A549 (cell line): ENCODE measurements at regions of chr19 and their contacts with region 1.

Region 1: DNA sequence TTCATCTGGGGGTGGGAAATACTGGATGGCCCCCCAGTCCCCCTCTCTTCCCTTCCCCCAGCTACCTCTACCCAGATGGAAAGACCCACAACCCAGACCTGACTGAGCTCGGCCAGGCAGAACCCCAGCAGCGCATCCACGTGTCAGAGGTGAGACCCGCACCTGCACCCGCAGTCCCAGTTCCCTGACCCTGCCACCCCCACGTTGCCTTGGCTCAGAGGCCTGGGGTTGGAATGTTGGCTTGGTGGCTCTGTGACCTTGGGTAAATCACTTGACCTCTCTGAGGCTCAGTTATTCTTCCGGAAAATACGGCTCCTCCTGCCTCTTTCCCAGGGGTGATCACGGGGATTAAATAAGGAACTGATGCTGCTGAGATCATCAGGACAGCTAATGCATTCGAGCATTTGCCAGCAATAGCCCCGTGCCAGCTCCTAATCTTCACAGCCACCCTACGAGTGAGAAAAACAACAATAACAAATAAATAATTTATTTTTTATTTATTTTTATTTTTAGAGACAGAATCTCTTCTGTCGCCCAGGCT is 12.3 kb downstream of the CBLC start:
- DNase-seq: no peak
- ATAC-seq: no peak
- H3K4me3 ChIP-seq: no peak overlapping the region
- H3K27ac ChIP-seq: no peak overlapping the region
- H3K4me1 ChIP-seq: no peaks in the 10 kb centered on the region
- CTCF ChIP-seq: no peak
- EP300 ChIP-seq: no peak
- POLR2A ChIP-seq: no peak
- RAD21 ChIP-seq: no peak

Region 2: DNA sequence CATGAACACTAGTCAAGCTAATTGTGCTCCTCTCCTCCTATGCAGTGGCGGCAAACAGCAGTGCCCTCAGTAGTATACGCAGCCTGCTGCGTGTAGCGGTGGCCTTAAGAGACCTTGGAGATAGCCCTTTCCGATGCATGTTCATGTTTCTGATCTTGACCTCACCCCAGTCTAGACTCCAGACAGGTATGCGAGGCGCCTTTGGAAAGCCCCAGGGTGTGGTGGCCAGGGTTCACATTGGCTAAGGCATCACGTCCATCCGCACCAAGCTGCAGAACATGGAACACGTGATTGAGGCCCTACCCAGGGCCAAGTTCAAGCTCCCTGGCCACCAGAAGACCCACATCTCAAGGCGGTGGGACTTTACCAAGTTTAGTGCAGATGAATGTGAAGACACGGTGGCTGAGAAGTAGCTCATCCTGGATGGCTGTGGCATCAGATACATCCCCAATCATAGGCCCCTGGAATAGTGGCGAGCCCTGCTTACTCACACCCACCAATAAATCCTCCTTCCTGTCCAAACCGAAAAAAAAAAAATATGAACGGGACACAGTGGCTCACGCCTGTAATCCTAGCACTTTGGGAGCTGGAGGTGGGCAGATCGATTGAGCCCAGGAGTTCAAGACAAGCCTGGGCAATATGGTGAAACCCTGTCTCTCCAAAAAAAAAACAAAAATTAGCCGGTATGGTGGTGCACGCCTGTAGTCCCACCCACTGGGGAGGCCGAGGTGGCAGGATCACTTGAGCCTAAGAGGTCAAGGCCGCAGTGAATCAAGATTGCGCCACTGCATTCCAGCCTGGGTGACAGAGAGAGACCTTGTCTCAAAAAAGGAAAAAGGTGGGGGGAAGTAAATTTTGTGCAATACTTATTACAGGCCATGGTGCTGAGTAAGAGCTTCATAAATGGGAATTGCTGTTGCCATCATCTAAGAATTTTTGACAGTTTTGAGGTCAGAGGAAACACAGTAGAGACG is 24.8 kb before region 1 on chr19:
- CTCF ChIA-PET with region 1: interaction called, 120 read pairs
- POLR2A ChIA-PET with region 1: no interaction called
- DNase-seq: peak in 1 of 2 experiments; percentile 89
- ATAC-seq: peak; percentile 10 to 51; a peak in 3 of 6 replicates
- H3K4me3 ChIP-seq: no peak overlapping the region
- H3K27ac ChIP-seq: peak overlapping the region; percentile 31 to 88
- H3K4me1 ChIP-seq: peaks cover 40% of the 10 kb centered on the region
- CTCF ChIP-seq: no peak
- EP300 ChIP-seq: peak in 1 of 2 experiments; percentile 24; a peak in 2 of 5 replicates
- POLR2A ChIP-seq: no peak
- RAD21 ChIP-seq: no peak

Region 3: DNA sequence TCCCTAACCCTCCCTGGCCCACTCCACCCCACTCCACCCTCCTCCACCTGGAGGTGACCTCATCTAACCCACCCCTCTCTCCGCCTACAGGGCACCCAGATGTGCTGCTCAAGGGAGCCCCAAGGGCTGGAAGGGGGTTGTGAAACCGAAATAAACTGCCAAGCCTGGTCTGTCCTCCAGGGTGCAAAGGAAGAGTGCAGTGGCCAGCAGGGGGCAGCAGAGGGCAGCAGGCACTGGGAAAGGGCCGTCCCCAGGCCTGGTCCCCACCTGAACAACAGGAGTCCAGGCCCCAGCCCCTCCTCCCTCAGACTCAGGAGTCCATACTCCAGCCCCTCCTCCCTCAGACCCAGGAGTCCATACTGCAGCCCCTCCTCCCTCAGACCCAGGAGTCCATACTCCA is 10.4 kb after region 1 on chr19:
- CTCF ChIA-PET with region 1: interaction called, 170 read pairs
- POLR2A ChIA-PET with region 1: no interaction called
- DNase-seq: peak; percentile 89 to 97
- ATAC-seq: peak; percentile 95 to 98
- H3K4me3 ChIP-seq: no peak overlapping the region
- H3K27ac ChIP-seq: peak overlapping the region; percentile 62 to 79; a peak in 5 of 6 replicates
- H3K4me1 ChIP-seq: peaks cover 19% of the 10 kb centered on the region
- CTCF ChIP-seq: peak; percentile 92
- EP300 ChIP-seq: no peak
- POLR2A ChIP-seq: no peak
- RAD21 ChIP-seq: peak; percentile 81 to 86

Region 4: DNA sequence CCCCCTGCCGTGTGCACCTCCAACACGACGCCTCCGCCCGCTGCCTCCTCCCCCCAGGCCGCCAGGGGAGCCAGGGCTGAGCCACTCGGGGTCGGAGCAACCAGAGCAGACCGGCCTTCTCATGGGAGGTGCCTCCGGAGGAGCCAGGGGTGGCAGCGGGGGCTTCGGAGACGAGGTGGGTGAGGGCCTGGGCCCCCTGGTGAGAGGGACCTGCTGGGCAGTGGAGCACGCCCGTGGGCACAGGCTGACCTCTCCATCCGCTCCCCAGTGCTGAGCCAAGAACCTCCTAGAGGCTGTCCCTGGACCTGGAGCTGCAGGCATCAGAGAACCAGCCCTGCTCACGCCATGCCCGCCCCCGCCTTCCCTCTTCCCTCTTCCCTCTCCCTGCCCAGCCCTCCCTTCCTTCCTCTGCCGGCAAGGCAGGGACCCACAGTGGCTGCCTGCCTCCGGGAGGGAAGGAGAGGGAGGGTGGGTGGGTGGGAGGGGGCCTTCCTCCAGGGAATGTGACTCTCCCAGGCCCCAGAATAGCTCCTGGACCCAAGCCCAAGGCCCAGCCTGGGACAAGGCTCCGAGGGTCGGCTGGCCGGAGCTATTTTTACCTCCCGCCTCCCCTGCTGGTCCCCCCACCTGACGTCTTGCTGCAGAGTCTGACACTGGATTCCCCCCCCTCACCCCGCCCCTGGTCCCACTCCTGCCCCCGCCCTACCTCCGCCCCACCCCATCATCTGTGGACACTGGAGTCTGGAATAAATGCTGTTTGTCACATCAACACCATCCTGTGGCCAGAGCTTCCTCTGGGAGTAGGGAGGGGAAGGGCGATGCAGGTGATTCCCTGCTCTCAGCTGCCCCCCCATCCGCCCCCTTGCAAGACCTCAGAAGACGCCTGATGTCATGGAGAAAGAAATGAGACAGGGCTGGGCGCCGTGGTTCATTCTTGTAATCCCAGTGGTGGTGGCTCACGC is 30.9 kb after region 1 on chr19:
- CTCF ChIA-PET with region 1: interaction called, 14 read pairs
- POLR2A ChIA-PET with region 1: no interaction called
- DNase-seq: no peak
- ATAC-seq: peak in 1 of 2 experiments; percentile 38; a peak in 3 of 6 replicates
- H3K4me3 ChIP-seq: no peak overlapping the region
- H3K27ac ChIP-seq: no peak overlapping the region
- H3K4me1 ChIP-seq: peaks cover 12% of the 10 kb centered on the region; the same call in 2 of the 3 replicates
- CTCF ChIP-seq: no peak
- EP300 ChIP-seq: no peak
- POLR2A ChIP-seq: no peak
- RAD21 ChIP-seq: no peak

Region 5: GRCh38 chr19:44866664-44867063 is 76.7 kb after region 1 on chr19:
- CTCF ChIA-PET with region 1: interaction called, 12 read pairs
- POLR2A ChIA-PET with region 1: no interaction called
- DNase-seq: no peak
- ATAC-seq: no peak
- H3K4me3 ChIP-seq: no peak overlapping the region
- H3K27ac ChIP-seq: no peak overlapping the region
- H3K4me1 ChIP-seq: no peaks in the 10 kb centered on the region
- CTCF ChIP-seq: no peak
- EP300 ChIP-seq: no peak
- POLR2A ChIP-seq: no peak
- RAD21 ChIP-seq: no peak